ENCODE measurements at regions of chr9 and their contacts with region 1.

Region 1: GRCh38 chr9:124040935-124041816 is 29.6 kb downstream of the LHX2 start:
- DNase-seq: peak; percentile 60
- H3K4me3 Mint-ChIP-seq: no peak overlapping the region
- H3K27ac Mint-ChIP-seq: no peak overlapping the region
- H3K4me1 Mint-ChIP-seq: peaks cover 7% of the 10 kb centered on the region
- H3K27me3 Mint-ChIP-seq: peaks cover 98% of the 10 kb centered on the region

Region 2: DNA sequence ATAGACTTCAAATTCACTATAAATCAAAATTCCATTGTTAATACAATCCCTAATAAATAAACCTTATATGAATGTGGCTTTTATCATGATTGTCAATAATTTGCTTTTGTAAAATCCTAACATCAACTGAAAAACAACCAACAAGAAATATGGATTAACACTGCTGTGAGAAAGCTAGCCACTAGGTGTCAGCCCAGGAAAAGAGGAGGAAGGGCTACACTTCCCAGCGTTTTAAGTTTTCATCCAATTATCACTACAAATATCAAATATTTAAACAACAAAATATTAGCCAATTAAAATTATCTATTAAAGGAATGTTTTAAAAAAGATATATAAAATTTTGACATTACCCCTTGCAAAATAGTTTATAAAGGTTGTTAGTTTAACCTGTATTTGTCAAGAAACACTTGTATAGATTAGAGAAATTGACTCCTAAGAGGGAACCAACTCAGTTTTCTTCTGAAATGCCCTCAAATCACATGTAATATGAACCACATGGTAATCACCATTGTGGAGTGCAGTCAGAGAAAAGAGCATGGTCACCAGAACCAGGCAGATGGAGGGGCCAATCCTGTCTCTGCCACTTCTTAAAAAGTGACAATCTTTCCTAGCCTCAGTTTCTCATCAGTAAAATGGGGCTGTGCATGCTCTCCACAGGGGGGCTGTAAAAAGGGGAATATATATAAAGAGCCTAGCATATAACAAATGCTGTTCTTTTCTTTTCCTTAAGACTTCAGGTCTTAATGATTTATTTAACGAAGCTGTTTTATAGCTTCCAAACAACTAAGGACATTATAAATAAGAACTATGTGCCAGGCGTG is 497.0 kb before region 1 on chr9:
- CTCF ChIA-PET with region 1: interaction called, 28 read pairs
- DNase-seq: peak; percentile 49
- H3K4me3 Mint-ChIP-seq: no peak overlapping the region
- H3K27ac Mint-ChIP-seq: no peak overlapping the region
- H3K4me1 Mint-ChIP-seq: no peaks in the 10 kb centered on the region
- H3K27me3 Mint-ChIP-seq: no peaks in the 10 kb centered on the region

Region 3: GRCh38 chr9:123741214-123741613 is 300.0 kb before region 1 on chr9:
- CTCF ChIA-PET with region 1: no interaction called
- DNase-seq: no peak
- H3K4me3 Mint-ChIP-seq: no peak overlapping the region
- H3K27ac Mint-ChIP-seq: no peak overlapping the region
- H3K4me1 Mint-ChIP-seq: no peaks in the 10 kb centered on the region
- H3K27me3 Mint-ChIP-seq: no peaks in the 10 kb centered on the region

Region 4: GRCh38 chr9:124054582-124055227 is 13.5 kb after region 1 on chr9:
- CTCF ChIA-PET with region 1: interaction called, 48 read pairs
- DNase-seq: no peak
- H3K4me3 Mint-ChIP-seq: no peak overlapping the region
- H3K27ac Mint-ChIP-seq: no peak overlapping the region
- H3K4me1 Mint-ChIP-seq: no peaks in the 10 kb centered on the region
- H3K27me3 Mint-ChIP-seq: peaks cover 27% of the 10 kb centered on the region

Measured in activated naive CD4-positive, alpha-beta T cell treated with anti-CD3 and anti-CD28 coated beads, Interleukin-2, amount 10 ng/mL, durations not matched to agents 7 days and 5 days (primary cell).